Naive thymus-derived CD8-positive, alpha-beta T cell (primary cell): ENCODE measurements at regions of chr9 and their contacts with region 1.

Region 1: DNA sequence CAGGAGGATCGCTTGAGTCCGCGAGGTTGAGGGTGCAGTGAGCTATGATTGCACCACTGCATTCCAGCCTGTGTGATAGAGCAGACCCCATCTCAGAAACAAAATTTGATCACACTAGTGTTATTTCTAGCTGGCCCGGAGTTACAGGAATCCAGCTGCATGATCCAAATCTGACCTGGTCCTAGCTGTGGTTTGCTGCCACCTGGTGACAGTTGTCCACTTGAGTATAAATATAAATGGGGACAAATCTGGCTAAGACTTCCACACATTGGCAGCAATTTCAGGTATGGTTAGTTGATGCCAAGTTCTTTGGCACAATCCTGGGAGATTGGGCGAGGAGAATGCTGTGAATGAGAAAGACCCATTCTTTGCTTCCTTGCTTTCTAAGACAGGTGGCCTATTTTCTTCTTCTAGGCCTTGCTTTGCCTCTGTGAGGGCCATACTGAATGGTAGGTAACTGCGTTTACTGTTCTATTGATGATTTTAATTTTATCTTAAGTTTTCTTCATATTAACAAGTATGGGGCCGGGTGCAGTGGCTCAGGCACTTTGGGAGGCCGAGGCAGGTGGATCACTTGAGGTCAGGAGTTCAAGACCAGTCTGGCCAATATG is 35.4 kb downstream of the UBE2R2 start:
- DNase-seq: peak; percentile 26 to 81 (median 50)
- ATAC-seq: peak; percentile 52 to 75
- H3K4me3 Mint-ChIP-seq: no peak overlapping the region
- H3K27ac Mint-ChIP-seq: peak overlapping the region in 5 of 10 donors; percentile 32 to 79 (median 60)
- H3K4me1 Mint-ChIP-seq: peaks cover 8 to 66% (median 42%) of the 10 kb centered on the region in 4 donors
- H3K27me3 Mint-ChIP-seq: no peaks in the 10 kb centered on the region

Region 2: GRCh38 chr9:33167046-33167808 is 685.1 kb before region 1 on chr9 and contains the start of gene B4GALT1:
- POLR2A ChIA-PET with region 1: no interaction called
- DNase-seq: peak; percentile 86 to 99 (median 93)
- ATAC-seq: peak; percentile 81 to 82
- H3K4me3 Mint-ChIP-seq: peak within 1 kb of the TSS; percentile 89 to 99 (median 96)
- H3K27ac Mint-ChIP-seq: peak within 1 kb of the TSS; percentile 94 to 100 (median 99)
- H3K4me1 Mint-ChIP-seq: peaks cover 42 to 70% (median 63%) of the 10 kb centered on the region in 4 donors
- H3K27me3 Mint-ChIP-seq: no peaks in the 10 kb centered on the region
- polyA plus RNA-seq, gene B4GALT1: 15.1 to 24.2 (median 18.6) TPM

Region 3: DNA sequence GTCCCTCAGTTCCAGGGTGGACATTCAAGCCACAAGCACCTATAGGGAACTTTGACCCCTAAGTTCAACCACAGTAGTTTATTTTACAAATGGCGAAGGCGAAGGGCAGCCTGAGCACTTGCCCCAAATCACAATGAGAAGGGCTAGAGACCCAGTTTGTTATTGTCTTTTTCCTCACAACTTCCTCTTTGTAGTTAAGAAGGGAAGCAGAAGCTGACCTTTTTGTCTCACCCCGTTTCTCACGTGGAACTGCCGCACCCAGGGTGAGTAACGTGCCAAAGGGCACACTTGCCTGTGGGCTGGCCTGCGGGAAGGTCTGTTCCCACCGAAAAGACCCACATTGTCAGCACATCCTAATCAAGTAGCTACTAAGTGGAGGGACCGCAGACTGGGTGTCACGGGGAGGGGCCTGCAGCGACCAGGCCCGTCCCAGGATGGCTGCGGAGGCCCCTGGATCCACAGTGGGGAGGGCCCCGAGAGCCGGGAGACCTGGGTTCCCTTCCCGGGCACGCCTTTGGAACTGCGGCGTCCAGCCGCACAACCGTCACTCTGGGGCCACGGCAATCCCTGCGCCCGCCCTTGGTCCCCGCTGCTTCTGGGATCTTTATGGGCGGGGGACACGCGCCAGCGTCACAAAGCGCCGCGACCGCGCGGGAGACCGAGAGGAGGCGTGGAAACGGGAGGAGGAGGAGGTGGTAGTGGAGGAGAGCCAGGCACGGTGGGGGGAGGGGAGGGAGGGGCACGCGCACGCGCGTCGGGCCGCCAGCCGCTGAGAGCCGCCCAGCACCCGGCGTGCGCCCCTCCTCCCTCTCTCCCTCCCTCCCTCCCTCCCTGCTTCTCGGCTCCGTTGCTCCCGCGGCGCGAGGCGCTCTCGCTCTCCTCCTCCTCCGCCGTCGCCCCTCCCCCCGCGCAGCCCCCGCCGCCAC is 35.7 kb before region 1 on chr9 and contains the start of gene UBE2R2:
- POLR2A ChIA-PET with region 1: interaction called, 11 read pairs
- DNase-seq: peak; percentile 87 to 95 (median 90)
- ATAC-seq: peak; percentile 77
- H3K4me3 Mint-ChIP-seq: peak within 1 kb of the TSS; percentile 85 to 99 (median 90)
- H3K27ac Mint-ChIP-seq: peak within 1 kb of the TSS; percentile 93 to 99 (median 97)
- H3K4me1 Mint-ChIP-seq: peaks cover 12 to 66% (median 53%) of the 10 kb centered on the region in 4 donors
- H3K27me3 Mint-ChIP-seq: peaks cover 0 to 2% (median 0%) of the 10 kb centered on the region in 5 donors
- polyA plus RNA-seq, gene UBE2R2: 13.1 to 16.1 (median 13.4) TPM

Region 4: DNA sequence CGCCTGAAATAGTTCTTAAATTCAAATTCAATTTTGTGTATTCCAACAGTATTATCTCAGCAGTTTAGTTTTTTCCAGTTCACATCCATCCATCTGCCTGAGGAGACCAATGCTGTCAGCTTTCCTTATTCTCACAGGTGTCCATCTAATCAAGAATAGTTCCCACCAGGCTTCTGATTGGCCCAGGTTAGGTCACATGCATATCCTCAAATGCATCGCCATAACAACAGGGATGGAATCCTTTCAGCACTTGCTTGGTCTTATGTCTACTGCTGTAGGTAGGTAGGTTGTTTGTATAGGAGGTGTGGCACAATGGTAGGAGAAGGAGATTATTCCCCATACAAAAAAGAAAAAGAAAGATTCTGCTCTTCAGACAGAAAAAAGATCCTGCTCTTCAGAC is 55.8 kb after region 1 on chr9:
- POLR2A ChIA-PET with region 1: no interaction called
- DNase-seq: no peak
- ATAC-seq: no peak
- H3K4me3 Mint-ChIP-seq: no peak overlapping the region
- H3K27ac Mint-ChIP-seq: peak overlapping the region in 3 of 10 donors; percentile 3 to 44 (median 9)
- H3K4me1 Mint-ChIP-seq: peaks cover 8 to 36% (median 21%) of the 10 kb centered on the region in 4 donors
- H3K27me3 Mint-ChIP-seq: no peaks in the 10 kb centered on the region